ENCODE measurements at regions of chr10 and their contacts with region 1.

Region 1: DNA sequence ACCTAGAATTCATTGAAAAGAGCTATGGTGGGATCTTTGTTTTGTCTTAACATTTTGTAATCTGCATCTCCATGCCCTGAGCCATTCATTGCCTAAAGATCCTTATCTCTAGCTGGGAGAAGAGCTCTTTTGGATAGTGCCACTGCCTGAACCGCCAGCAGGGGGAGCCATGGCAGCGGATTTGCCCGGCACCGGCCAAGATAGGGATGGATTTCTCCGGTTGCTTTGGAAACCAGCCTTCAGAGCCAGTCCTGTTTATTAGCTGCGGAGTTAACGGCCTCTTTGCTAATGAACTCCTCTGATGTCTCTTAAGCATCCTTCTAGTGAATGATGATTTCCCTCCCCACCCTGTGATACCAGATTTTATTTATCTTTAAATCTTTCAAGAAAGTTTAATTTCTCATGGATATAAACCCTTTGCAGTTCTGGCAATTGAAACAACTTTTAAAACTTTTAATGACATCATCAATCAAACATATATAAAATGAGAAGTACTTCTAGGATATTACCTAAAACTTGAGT is 58.2 kb upstream of the LYZL2 start:
- DNase-seq: peak; percentile 92
- ATAC-seq: peak; percentile 98
- H3K4me3 Mint-ChIP-seq: no peak overlapping the region
- H3K27ac Mint-ChIP-seq: no peak overlapping the region
- H3K4me1 Mint-ChIP-seq: peaks cover 32% of the 10 kb centered on the region
- H3K27me3 Mint-ChIP-seq: no peaks in the 10 kb centered on the region
- CTCF ChIP-seq: peak; percentile 77

Region 2: GRCh38 chr10:30639946-30640786 is 47.6 kb before region 1 on chr10:
- CTCF ChIA-PET with region 1: interaction called, 25 read pairs
- POLR2A ChIA-PET with region 1: no interaction called
- DNase-seq: no peak
- ATAC-seq: no peak
- H3K4me3 Mint-ChIP-seq: no peak overlapping the region
- H3K27ac Mint-ChIP-seq: no peak overlapping the region
- H3K4me1 Mint-ChIP-seq: peaks cover 43% of the 10 kb centered on the region
- H3K27me3 Mint-ChIP-seq: no peaks in the 10 kb centered on the region
- CTCF ChIP-seq: peak; percentile 74

Region 3: DNA sequence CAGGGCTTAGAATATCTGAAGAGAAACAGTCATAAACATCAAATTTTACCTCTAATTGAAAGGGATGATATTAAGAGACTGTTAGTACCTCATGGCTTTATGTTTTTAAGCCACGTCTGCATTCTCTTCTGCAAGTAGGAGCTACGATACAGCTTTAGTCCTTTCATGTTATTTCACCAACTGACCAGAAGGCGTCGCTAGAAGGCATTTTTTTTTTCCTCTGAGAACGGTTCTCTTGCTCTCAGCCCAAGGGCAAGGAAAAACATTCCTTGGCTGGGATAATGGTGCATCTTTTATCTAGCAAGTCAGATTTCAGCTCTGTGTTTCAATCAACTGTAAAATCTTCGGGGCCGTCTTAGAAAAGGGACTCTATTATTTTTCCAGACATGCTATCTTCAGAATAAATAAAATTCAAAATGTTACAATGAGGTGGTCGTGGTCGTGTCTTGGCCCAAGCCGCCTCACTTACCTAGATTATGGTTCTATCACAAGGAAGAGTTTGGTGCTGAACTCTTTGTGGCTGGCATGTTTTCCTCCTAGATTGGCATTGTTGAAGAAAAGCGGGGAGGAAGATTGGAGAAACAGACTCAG is 16.6 kb before region 1 on chr10:
- CTCF ChIA-PET with region 1: interaction called, 26 read pairs
- POLR2A ChIA-PET with region 1: no interaction called
- DNase-seq: peak; percentile 24
- ATAC-seq: peak; percentile 80
- H3K4me3 Mint-ChIP-seq: no peak overlapping the region
- H3K27ac Mint-ChIP-seq: no peak overlapping the region
- H3K4me1 Mint-ChIP-seq: peaks cover 6% of the 10 kb centered on the region; the same call in 1 of the 2 replicates
- H3K27me3 Mint-ChIP-seq: no peaks in the 10 kb centered on the region
- CTCF ChIP-seq: peak; percentile 73

Region 4: GRCh38 chr10:30697806-30698205 is 10.0 kb after region 1 on chr10:
- CTCF ChIA-PET with region 1: interaction called, 18 read pairs
- POLR2A ChIA-PET with region 1: no interaction called
- DNase-seq: no peak
- ATAC-seq: no peak
- H3K4me3 Mint-ChIP-seq: no peak overlapping the region
- H3K27ac Mint-ChIP-seq: no peak overlapping the region
- H3K4me1 Mint-ChIP-seq: peaks cover 36% of the 10 kb centered on the region
- H3K27me3 Mint-ChIP-seq: no peaks in the 10 kb centered on the region
- CTCF ChIP-seq: no peak

Region 5: GRCh38 chr10:30705101-30705624 is 17.4 kb after region 1 on chr10:
- CTCF ChIA-PET with region 1: interaction called, 14 read pairs
- POLR2A ChIA-PET with region 1: no interaction called
- DNase-seq: no peak
- ATAC-seq: no peak; the same call in 1 of the 2 replicates
- H3K4me3 Mint-ChIP-seq: no peak overlapping the region
- H3K27ac Mint-ChIP-seq: no peak overlapping the region
- H3K4me1 Mint-ChIP-seq: peaks cover 48% of the 10 kb centered on the region
- H3K27me3 Mint-ChIP-seq: peaks cover 6% of the 10 kb centered on the region; the same call in 1 of the 2 replicates
- CTCF ChIP-seq: no peak

Region 6: DNA sequence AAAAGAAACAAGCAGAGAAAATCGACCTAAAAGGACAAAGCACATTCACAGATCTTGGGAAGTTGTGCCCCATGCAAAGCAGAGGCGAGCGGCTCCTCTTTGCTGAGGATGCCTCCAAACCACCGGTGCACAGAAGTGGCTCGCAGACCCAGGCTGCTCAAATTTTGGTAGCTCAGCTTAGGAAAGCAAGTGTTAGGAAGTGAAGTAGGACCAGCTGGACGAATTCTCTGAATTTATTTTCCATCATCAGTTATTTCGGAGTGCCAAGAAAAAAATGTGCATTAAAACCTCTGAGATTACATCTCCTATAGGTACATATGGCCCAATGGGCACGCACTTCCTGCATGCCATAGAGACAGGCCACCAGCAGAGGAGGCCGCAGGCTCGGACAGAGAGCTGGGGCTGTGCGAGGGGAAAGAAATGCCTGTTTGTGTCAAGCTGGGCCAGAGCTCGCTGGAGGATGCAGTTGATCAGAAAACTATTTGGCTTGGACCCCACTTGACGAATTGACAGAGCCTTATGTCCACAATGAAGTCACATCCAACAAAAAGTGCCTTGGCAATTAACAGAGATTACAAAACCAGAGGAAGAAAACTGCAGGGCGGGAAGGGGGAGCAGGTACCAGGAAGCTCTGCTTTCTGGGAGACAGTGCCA is 64.0 kb after region 1 on chr10:
- CTCF ChIA-PET with region 1: interaction called, 18 read pairs
- POLR2A ChIA-PET with region 1: no interaction called
- DNase-seq: peak; percentile 80
- ATAC-seq: peak; percentile 98
- H3K4me3 Mint-ChIP-seq: no peak overlapping the region
- H3K27ac Mint-ChIP-seq: no peak overlapping the region
- H3K4me1 Mint-ChIP-seq: peaks cover 5% of the 10 kb centered on the region
- H3K27me3 Mint-ChIP-seq: no peaks in the 10 kb centered on the region; the same call in none of the 2 replicates
- CTCF ChIP-seq: peak; percentile 67

Measured in WTC11 (cell line).